SK-N-SH (cell line): ENCODE measurements at regions of chr6 and their contacts with region 1.

Region 1: GRCh38 chr6:5471044-5471443 is 209.7 kb downstream of the FARS2 start:
- DNase-seq: peak; percentile 66
- H3K4me3 ChIP-seq: peak overlapping the region in 1 of 2 experiments; percentile 3; a peak in 1 of 4 replicates
- H3K27ac ChIP-seq: no peak overlapping the region; a peak in 2 of 4 replicates
- H3K4me1 ChIP-seq: peaks cover 20 to 35% of the 10 kb centered on the region in 2 experiments; a peak in 3 of 4 replicates
- H3K27me3 ChIP-seq: no peaks in the 10 kb centered on the region
- CTCF ChIP-seq: peak; percentile 98
- EP300 ChIP-seq: no peak
- RAD21 ChIP-seq: peak; percentile 92

Region 2: GRCh38 chr6:5640614-5641013 is 169.6 kb after region 1 on chr6:
- CTCF ChIA-PET with region 1: interaction called, 12 read pairs
- POLR2A ChIA-PET with region 1: no interaction called
- DNase-seq: no peak
- H3K4me3 ChIP-seq: no peak overlapping the region
- H3K27ac ChIP-seq: no peak overlapping the region
- H3K4me1 ChIP-seq: peaks cover 0 to 16% of the 10 kb centered on the region in 2 experiments; a peak in 2 of 4 replicates
- H3K27me3 ChIP-seq: no peaks in the 10 kb centered on the region
- CTCF ChIP-seq: no peak
- EP300 ChIP-seq: no peak
- RAD21 ChIP-seq: no peak

Region 3: DNA sequence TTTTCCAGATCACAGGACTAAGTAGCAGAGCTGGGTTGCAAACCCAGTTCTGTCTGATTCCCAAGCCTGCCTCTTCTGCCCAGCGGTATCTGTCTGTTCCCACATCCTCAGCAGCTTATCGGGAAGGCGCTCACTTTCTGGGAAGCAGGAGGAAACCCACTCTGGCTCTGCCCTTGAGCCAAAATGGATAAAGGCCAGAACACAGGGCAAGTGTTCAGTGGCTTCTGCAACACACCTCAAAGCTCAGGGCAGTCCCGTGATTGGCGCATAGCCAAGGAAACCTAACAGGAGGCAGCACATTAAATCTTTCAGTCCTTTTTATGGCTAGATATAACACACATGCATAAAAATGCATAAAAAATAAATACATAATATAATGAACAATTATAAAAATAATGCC is 273.5 kb after region 1 on chr6:
- CTCF ChIA-PET with region 1: interaction called, 17 read pairs
- POLR2A ChIA-PET with region 1: no interaction called
- DNase-seq: peak; percentile 47
- H3K4me3 ChIP-seq: no peak overlapping the region
- H3K27ac ChIP-seq: peak overlapping the region in 1 of 2 experiments; percentile 65; a peak in 2 of 4 replicates
- H3K4me1 ChIP-seq: peaks cover 0 to 57% of the 10 kb centered on the region in 2 experiments; a peak in 2 of 4 replicates
- H3K27me3 ChIP-seq: no peaks in the 10 kb centered on the region
- CTCF ChIP-seq: no peak
- EP300 ChIP-seq: peak in 1 of 2 experiments; percentile 62; a peak in 2 of 4 replicates
- RAD21 ChIP-seq: no peak

Region 4: GRCh38 chr6:5905431-5906339 is 434.6 kb after region 1 on chr6:
- CTCF ChIA-PET with region 1: interaction called, 10 read pairs
- POLR2A ChIA-PET with region 1: no interaction called
- DNase-seq: no peak
- H3K4me3 ChIP-seq: no peak overlapping the region
- H3K27ac ChIP-seq: no peak overlapping the region
- H3K4me1 ChIP-seq: peaks cover 0 to 7% of the 10 kb centered on the region in 2 experiments; a peak in 1 of 4 replicates
- H3K27me3 ChIP-seq: no peaks in the 10 kb centered on the region
- CTCF ChIP-seq: no peak
- EP300 ChIP-seq: peak in 1 of 2 experiments; percentile 23; a peak in 1 of 4 replicates
- RAD21 ChIP-seq: no peak